ENCODE measurements at regions of chr16 and their contacts with region 1.

Region 1: DNA sequence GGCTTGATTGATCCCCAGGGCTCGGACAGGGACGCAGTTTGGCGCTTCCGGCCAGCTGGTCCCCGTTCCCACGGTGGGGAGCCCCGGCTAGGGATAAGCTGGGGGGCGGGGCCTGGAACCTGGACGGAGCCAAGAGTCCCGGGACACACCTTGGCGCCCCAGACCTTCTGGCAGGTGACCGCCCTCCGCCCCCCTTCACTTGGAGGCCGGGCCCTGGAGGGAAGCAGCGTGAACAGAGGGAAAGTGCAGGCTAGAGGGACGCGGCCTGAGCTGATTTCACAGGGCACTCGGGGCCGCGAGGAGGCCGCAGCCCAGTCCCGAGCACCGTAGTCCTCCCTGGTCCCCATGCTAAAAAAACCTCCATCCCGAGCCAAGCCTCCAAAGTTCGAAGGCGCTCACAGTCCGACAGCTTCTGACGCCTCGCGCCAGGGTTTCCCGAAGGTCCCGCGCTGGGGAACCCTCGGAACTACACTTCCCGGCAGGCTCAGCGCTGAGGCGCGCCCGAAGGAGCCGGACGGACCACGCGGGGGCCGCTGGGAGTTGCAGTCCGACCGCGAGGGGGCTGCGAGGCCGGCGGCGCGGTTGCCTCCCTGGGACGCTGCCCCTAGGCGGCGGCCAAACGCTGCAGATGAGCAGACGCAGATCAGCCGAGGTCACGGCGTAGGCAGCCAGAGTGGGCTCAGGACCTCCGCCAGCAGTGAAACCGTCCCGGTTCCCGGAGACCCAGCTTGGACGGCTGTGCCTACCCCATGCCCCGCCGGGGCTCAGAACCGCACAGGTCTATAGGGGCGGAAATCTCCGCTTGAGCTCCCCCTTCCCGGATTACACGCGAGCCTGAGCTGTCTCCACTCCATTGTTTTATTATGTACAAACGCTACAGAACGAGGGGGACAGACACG is at the start of gene TBX6:
- DNase-seq: peak; percentile 95
- ATAC-seq: peak; percentile 74
- H3K4me3 ChIP-seq: peak within 1 kb of the TSS; percentile 52 to 77 (median 70)
- H3K4me3 Mint-ChIP-seq: peak within 1 kb of the TSS; percentile 92
- H3K27ac ChIP-seq: peak within 1 kb of the TSS; percentile 87 to 92
- H3K27ac Mint-ChIP-seq: peak within 1 kb of the TSS; percentile 98
- H3K4me1 ChIP-seq: peaks cover 33 to 62% of the 10 kb centered on the region in 2 donors
- H3K4me1 Mint-ChIP-seq: peaks cover 53% of the 10 kb centered on the region
- H3K27me3 ChIP-seq: no peaks in the 10 kb centered on the region
- H3K27me3 Mint-ChIP-seq: no peaks in the 10 kb centered on the region
- CTCF ChIP-seq: peak; percentile 76
- total RNA-seq, gene TBX6: 5.4 and 6.1 TPM in 2 replicates

Region 2: GRCh38 chr16:28924732-28925385 is 1166.9 kb before region 1 on chr16 and contains the start of gene RABEP2:
- CTCF ChIA-PET with region 1: no interaction called
- POLR2A ChIA-PET with region 1: interaction called, 10 read pairs
- intact Hi-C with region 1: no loop called
- DNase-seq: peak; percentile 97
- ATAC-seq: peak; percentile 60
- H3K4me3 ChIP-seq: peak within 1 kb of the TSS; percentile 58 to 97 (median 92)
- H3K4me3 Mint-ChIP-seq: peak within 1 kb of the TSS; percentile 95
- H3K27ac ChIP-seq: peak within 1 kb of the TSS; percentile 87 to 91
- H3K27ac Mint-ChIP-seq: peak within 1 kb of the TSS; percentile 98
- H3K4me1 ChIP-seq: peaks cover 30 to 61% of the 10 kb centered on the region in 2 donors
- H3K4me1 Mint-ChIP-seq: peaks cover 51% of the 10 kb centered on the region
- H3K27me3 ChIP-seq: no peaks in the 10 kb centered on the region
- H3K27me3 Mint-ChIP-seq: no peaks in the 10 kb centered on the region
- CTCF ChIP-seq: no peak
- total RNA-seq, gene RABEP2: 132 and 136 TPM in 2 replicates

Region 3: GRCh38 chr16:29805378-29806098 is 286.2 kb before region 1 on chr16:
- CTCF ChIA-PET with region 1: no interaction called
- POLR2A ChIA-PET with region 1: no interaction called
- intact Hi-C with region 1: no loop called
- DNase-seq: peak; percentile 99
- ATAC-seq: peak; percentile 69
- H3K4me3 ChIP-seq: peak overlapping the region; percentile 63 to 95 (median 89)
- H3K4me3 Mint-ChIP-seq: peak overlapping the region; percentile 98
- H3K27ac ChIP-seq: peak overlapping the region; percentile 87 to 91
- H3K27ac Mint-ChIP-seq: peak overlapping the region; percentile 100
- H3K4me1 ChIP-seq: peaks cover 43 to 48% of the 10 kb centered on the region in 2 donors
- H3K4me1 Mint-ChIP-seq: peaks cover 44% of the 10 kb centered on the region
- H3K27me3 ChIP-seq: no peaks in the 10 kb centered on the region
- H3K27me3 Mint-ChIP-seq: no peaks in the 10 kb centered on the region
- CTCF ChIP-seq: peak; percentile 13

Region 4: GRCh38 chr16:30065143-30065850 is 26.4 kb before region 1 on chr16 and contains the start of gene ALDOA:
- CTCF ChIA-PET with region 1: interaction called, 28 read pairs
- POLR2A ChIA-PET with region 1: interaction called, 61 read pairs
- intact Hi-C with region 1: loop called (anchors 1 kb)
- DNase-seq: peak; percentile 97
- ATAC-seq: peak; percentile 83
- H3K4me3 ChIP-seq: peak within 1 kb of the TSS; percentile 73 to 96 (median 87)
- H3K4me3 Mint-ChIP-seq: peak within 1 kb of the TSS; percentile 100
- H3K27ac ChIP-seq: peak within 1 kb of the TSS; percentile 82 to 88
- H3K27ac Mint-ChIP-seq: peak within 1 kb of the TSS; percentile 99
- H3K4me1 ChIP-seq: peaks cover 16 to 42% of the 10 kb centered on the region in 2 donors
- H3K4me1 Mint-ChIP-seq: peaks cover 31% of the 10 kb centered on the region
- H3K27me3 ChIP-seq: no peaks in the 10 kb centered on the region
- H3K27me3 Mint-ChIP-seq: no peaks in the 10 kb centered on the region
- CTCF ChIP-seq: no peak
- total RNA-seq, gene ALDOA: 301 and 329 TPM in 2 replicates

Region 5: GRCh38 chr16:30122604-30123160 is 31.0 kb after region 1 on chr16:
- CTCF ChIA-PET with region 1: interaction called, 8 read pairs
- POLR2A ChIA-PET with region 1: interaction called, 9 read pairs
- intact Hi-C with region 1: loop called (anchors 1 kb)
- DNase-seq: peak; percentile 50
- ATAC-seq: peak; percentile 9
- H3K4me3 ChIP-seq: peak overlapping the region; percentile 38 to 79 (median 75)
- H3K4me3 Mint-ChIP-seq: peak overlapping the region; percentile 86
- H3K27ac ChIP-seq: peak overlapping the region; percentile 38 to 74
- H3K27ac Mint-ChIP-seq: peak overlapping the region; percentile 81
- H3K4me1 ChIP-seq: peaks cover 18 to 24% of the 10 kb centered on the region in 2 donors
- H3K4me1 Mint-ChIP-seq: peaks cover 24% of the 10 kb centered on the region
- H3K27me3 ChIP-seq: no peaks in the 10 kb centered on the region
- H3K27me3 Mint-ChIP-seq: no peaks in the 10 kb centered on the region
- CTCF ChIP-seq: no peak

Region 6: DNA sequence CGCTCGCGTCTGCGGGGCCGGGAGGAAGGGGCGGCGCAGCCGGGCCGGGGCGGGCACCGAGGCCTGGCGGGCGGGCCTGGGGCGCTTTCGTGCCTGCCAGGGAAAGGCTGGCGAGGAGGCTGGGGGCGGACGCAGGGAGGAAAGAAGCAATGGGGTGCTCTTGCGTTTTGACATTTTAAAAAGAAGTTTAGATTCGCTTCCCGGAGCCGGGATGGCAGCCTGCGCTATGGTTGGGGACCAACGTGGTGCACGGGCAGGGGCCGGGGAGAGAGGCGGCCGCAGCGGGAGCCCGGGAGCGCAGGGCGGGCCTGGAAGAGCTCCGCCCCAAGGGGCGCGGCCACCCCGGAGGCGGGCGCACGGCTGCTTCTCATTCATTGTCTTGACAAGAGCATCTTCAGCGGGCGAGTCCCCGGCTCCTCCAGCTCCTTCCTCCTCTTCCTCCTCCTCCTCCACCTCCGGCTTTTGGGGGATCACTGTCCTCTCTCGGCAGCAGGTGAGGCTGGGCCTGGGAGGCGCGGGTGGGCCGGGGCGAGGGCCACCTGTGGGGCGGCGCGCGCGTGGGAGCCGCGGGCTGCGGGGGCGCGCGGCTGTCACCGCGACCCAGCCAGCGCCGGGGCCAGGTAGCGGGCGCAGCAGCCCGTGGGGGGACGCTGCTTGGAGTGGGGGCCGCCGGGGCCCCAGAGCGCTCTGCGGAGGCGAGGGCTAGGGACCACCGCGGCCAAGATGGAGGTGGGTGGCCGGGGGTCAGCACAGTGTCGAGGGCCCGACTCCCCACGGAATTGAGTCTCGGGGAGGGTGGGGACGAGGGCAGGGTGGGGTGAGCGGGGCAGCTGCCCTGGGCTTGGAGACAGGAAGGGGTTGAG is 91.7 kb after region 1 on chr16 and contains the start of gene CORO1A:
- CTCF ChIA-PET with region 1: interaction called, 49 read pairs
- POLR2A ChIA-PET with region 1: interaction called, 97 read pairs
- intact Hi-C with region 1: no loop called
- DNase-seq: peak; percentile 91
- ATAC-seq: peak; percentile 62
- H3K4me3 ChIP-seq: peak within 1 kb of the TSS; percentile 54 to 99 (median 97)
- H3K4me3 Mint-ChIP-seq: peak within 1 kb of the TSS; percentile 90
- H3K27ac ChIP-seq: peak within 1 kb of the TSS; percentile 78 to 87
- H3K27ac Mint-ChIP-seq: peak within 1 kb of the TSS; percentile 99
- H3K4me1 ChIP-seq: peaks cover 40 to 48% of the 10 kb centered on the region in 2 donors
- H3K4me1 Mint-ChIP-seq: peaks cover 46% of the 10 kb centered on the region
- H3K27me3 ChIP-seq: no peaks in the 10 kb centered on the region
- H3K27me3 Mint-ChIP-seq: no peaks in the 10 kb centered on the region
- CTCF ChIP-seq: no peak
- total RNA-seq, gene CORO1A: 653 and 662 TPM in 2 replicates

Region 7: GRCh38 chr16:30526823-30527635 is 435.3 kb after region 1 on chr16:
- CTCF ChIA-PET with region 1: no interaction called
- POLR2A ChIA-PET with region 1: no interaction called
- intact Hi-C with region 1: loop called (anchors 1 kb)
- DNase-seq: peak; percentile 94
- ATAC-seq: peak; percentile 82
- H3K4me3 ChIP-seq: peak overlapping the region; percentile 59 to 97 (median 82)
- H3K4me3 Mint-ChIP-seq: peak overlapping the region; percentile 88
- H3K27ac ChIP-seq: peak overlapping the region; percentile 87 to 89
- H3K27ac Mint-ChIP-seq: peak overlapping the region; percentile 96
- H3K4me1 ChIP-seq: peaks cover 13 to 30% of the 10 kb centered on the region in 2 donors
- H3K4me1 Mint-ChIP-seq: peaks cover 20% of the 10 kb centered on the region
- H3K27me3 ChIP-seq: no peaks in the 10 kb centered on the region
- H3K27me3 Mint-ChIP-seq: no peaks in the 10 kb centered on the region
- CTCF ChIP-seq: peak; percentile 6